Activated T-helper 2 cell treated with anti-CD3 and anti-CD28 coated beads, Interferon-gamma antibody, Interleukin-2, Interleukin-4, amounts not matched to agents 10 μg/mL and 5 μg/mL and 100 μg/mL, durations not matched to agents 14 hours and 24 hours and 36 hours (primary cell): ENCODE measurements at regions of chr11 and their contacts with region 1.

Region 1: GRCh38 chr11:11571893-11572292 is 49.9 kb downstream of the GALNT18 start:
- DNase-seq: no peak
- H3K4me3 Mint-ChIP-seq: no peak overlapping the region
- H3K27ac Mint-ChIP-seq: no peak overlapping the region
- H3K4me1 Mint-ChIP-seq: peaks cover 30% of the 10 kb centered on the region
- H3K27me3 Mint-ChIP-seq: no peaks in the 10 kb centered on the region

Region 2: DNA sequence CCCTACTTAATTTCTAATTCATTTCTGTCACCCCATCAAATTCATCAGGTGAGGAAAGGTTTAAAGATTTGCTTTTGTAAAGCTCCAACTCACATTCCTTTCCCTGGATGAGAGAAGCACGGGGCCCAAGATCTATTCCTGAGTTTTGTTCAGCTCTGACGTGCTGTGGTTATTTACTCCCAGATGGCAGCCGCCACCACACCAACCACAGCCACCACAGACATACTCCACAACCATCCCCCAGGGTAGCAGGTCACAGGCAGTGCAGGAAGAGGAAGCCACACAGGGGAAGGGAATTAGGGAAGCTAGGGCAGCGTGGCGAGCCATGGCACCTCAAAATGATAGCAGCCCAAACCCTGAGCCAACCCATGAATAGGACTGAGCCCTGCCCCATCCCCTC is 155.4 kb before region 1 on chr11:
- intact Hi-C with region 1: no loop called
- DNase-seq: no peak
- H3K4me3 Mint-ChIP-seq: no peak overlapping the region
- H3K27ac Mint-ChIP-seq: no peak overlapping the region
- H3K4me1 Mint-ChIP-seq: peaks cover 4% of the 10 kb centered on the region
- H3K27me3 Mint-ChIP-seq: peaks cover 12% of the 10 kb centered on the region

Region 3: DNA sequence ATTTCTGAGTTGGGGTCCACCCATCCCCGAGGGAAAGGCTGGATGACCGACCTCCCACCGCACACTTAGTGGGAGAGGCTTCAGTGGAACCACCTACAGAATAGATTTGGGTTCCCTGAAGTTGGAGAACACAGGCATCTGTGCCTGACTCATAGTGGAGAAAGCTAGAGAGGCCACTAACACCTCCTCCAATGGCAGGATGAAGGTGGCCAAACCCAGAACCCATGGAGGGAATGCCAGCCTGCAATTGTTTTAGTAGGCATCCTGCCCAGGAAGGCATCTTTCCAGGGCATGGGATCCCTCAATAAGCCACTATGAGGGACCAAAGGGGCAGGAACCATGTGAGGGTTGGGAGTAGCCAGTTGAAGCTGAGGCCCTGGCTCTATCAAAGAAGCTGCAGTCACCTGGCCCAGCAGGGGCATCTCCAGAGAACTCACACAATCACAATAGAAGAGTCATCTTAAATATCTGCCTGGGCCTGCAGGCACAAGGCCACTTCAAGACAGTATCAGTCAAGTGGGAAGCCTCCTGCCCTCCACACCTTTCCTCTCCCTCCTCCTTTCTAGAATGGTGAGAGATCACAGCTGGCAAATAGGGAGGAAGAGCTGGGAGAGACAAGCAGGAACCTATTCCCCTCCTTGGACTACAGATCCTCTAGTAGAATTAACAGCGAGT is 94.8 kb before region 1 on chr11:
- intact Hi-C with region 1: no loop called
- DNase-seq: no peak
- H3K4me3 Mint-ChIP-seq: no peak overlapping the region
- H3K27ac Mint-ChIP-seq: no peak overlapping the region
- H3K4me1 Mint-ChIP-seq: no peaks in the 10 kb centered on the region
- H3K27me3 Mint-ChIP-seq: no peaks in the 10 kb centered on the region

Region 4: DNA sequence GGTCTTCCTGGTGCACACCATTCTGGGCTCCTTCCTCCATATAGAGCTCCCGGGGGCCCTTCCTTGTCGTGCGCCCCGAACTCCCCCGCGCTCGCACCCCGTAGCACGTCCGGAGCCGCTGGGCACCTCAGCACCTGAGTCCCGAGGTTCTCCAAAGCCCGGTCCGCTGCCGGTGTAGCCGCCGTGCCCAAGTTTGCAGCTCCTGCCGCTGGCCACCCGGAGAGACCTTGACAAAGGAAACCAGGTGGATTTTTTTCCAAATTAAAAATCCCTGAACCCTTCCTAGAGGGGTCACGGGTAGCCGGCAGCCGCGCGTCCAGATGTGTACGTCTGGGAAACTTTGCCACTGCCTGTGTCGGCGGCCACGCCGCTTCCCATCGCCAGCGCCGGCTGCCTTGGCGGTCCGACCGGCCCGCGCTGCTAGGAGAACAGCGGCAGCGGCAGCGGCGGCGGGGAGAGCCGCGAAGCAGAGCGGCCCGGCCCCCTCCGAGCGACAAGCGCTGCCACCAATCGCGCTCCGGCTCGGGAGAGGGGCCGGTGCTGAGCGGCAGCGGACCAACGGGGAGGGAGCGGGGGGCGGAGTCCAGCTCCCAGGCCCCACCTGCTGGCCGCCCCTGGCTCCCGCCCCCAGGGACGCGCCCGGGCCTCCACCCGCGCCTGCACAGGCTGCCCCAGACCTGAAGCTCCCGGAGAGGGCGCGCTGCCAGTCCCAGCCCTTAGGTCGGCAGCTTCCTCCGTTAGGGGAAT is 49.9 kb after region 1 on chr11 and contains the start of gene GALNT18:
- intact Hi-C with region 1: loop called (anchors 1 kb)
- DNase-seq: peak; percentile 83
- H3K4me3 Mint-ChIP-seq: peak within 1 kb of the TSS; percentile 82
- H3K27ac Mint-ChIP-seq: peak within 1 kb of the TSS; percentile 59
- H3K4me1 Mint-ChIP-seq: peaks cover 8% of the 10 kb centered on the region
- H3K27me3 Mint-ChIP-seq: peaks cover 63% of the 10 kb centered on the region
- total RNA-seq, gene GALNT18: 5.0 and 5.5 TPM in 2 replicates

Region 5: GRCh38 chr11:11757909-11758308 is 186.0 kb after region 1 on chr11:
- intact Hi-C with region 1: no loop called
- DNase-seq: no peak
- H3K4me3 Mint-ChIP-seq: no peak overlapping the region
- H3K27ac Mint-ChIP-seq: no peak overlapping the region
- H3K4me1 Mint-ChIP-seq: no peaks in the 10 kb centered on the region
- H3K27me3 Mint-ChIP-seq: no peaks in the 10 kb centered on the region